ENCODE measurements at regions of chr1 and their contacts with region 1.

Region 1: GRCh38 chr1:191125950-191126349 is 648.3 kb upstream of the BRINP3 start:
- DNase-seq: no peak
- H3K4me3 ChIP-seq: no peak overlapping the region
- H3K4me3 Mint-ChIP-seq: no peak overlapping the region
- H3K27ac Mint-ChIP-seq: no peak overlapping the region
- H3K4me1 ChIP-seq: no peaks in the 10 kb centered on the region
- H3K4me1 Mint-ChIP-seq: no peaks in the 10 kb centered on the region
- H3K27me3 ChIP-seq: no peaks in the 10 kb centered on the region
- H3K27me3 Mint-ChIP-seq: no peaks in the 10 kb centered on the region
- CTCF ChIP-seq: no peak

Region 2: GRCh38 chr1:190633488-190633887 is 492.5 kb before region 1 on chr1:
- CTCF ChIA-PET with region 1: no interaction called
- POLR2A ChIA-PET with region 1: no interaction called
- intact Hi-C with region 1: loop called (anchors 5 kb)
- DNase-seq: no peak
- H3K4me3 ChIP-seq: no peak overlapping the region
- H3K4me3 Mint-ChIP-seq: no peak overlapping the region
- H3K27ac Mint-ChIP-seq: no peak overlapping the region
- H3K4me1 ChIP-seq: no peaks in the 10 kb centered on the region
- H3K4me1 Mint-ChIP-seq: no peaks in the 10 kb centered on the region
- H3K27me3 ChIP-seq: no peaks in the 10 kb centered on the region
- H3K27me3 Mint-ChIP-seq: peaks cover 3% of the 10 kb centered on the region
- CTCF ChIP-seq: no peak

Measured in Caco-2 (cell line).